ENCODE measurements at regions of chr6 and their contacts with region 1.

Region 1: DNA sequence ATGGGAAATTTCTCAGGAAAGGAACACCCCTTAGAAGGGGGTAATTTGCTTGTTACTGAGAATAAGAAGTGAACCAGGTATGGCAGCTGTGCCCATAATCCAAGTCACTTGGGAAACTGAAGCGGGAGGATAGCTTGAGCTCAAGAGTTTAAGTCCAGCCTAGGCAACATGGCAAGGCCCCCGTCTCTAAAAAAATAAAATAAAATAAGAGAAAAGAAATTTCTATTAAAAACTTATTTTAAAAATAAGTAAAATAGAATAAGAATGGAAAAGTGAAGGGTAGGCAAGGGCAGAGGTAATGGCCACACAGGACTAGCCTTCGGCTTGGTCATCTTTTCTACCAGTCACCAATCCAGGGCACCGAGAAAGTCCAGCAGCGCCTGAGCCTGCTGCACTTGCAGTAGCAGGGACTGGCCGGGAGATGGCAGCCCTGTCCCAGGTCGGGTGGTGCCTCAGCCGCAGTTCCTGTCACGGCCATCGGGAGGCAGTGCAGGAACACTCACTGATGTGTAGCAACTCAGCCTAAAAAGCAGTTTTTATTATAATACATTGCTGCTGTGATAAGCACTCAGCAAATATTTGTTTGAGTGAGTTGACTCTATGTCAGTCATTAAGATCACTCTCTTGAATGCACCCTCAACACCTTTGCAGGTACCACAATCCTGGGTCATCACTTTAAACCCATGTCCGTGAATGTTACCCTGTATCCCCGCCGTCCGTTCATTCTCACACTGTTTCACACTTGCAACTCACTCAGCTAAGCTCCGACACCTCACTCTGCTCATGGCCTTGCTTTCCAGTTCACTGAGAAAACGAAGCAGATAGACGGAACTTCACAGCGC is 23.2 kb upstream of the GCM1 start:
- DNase-seq: peak; percentile 58
- H3K4me3 ChIP-seq: no peak overlapping the region
- H3K27ac ChIP-seq: no peak overlapping the region
- H3K4me1 ChIP-seq: peaks cover 15% of the 10 kb centered on the region
- H3K27me3 ChIP-seq: no peaks in the 10 kb centered on the region
- CTCF ChIP-seq: peak; percentile 100

Region 2: GRCh38 chr6:53064726-53065215 is 107.1 kb before region 1 on chr6:
- CTCF ChIA-PET with region 1: no interaction called
- dilution Hi-C with region 1: no loop called
- in situ Hi-C with region 1: no loop called
- intact Hi-C with region 1: no loop called
- DNase-seq: peak; percentile 97
- H3K4me3 ChIP-seq: peak overlapping the region; percentile 85 to 95 (median 88)
- H3K27ac ChIP-seq: peak overlapping the region; percentile 45
- H3K4me1 ChIP-seq: peaks cover 11% of the 10 kb centered on the region
- H3K27me3 ChIP-seq: no peaks in the 10 kb centered on the region
- CTCF ChIP-seq: no peak

Region 3: GRCh38 chr6:53294095-53294494 is 122.3 kb after region 1 on chr6:
- CTCF ChIA-PET with region 1: no interaction called
- dilution Hi-C with region 1: no loop called
- in situ Hi-C with region 1: no loop called
- intact Hi-C with region 1: loop called (anchors 5 kb)
- DNase-seq: no peak
- H3K4me3 ChIP-seq: no peak overlapping the region
- H3K27ac ChIP-seq: no peak overlapping the region
- H3K4me1 ChIP-seq: peaks cover 16% of the 10 kb centered on the region
- H3K27me3 ChIP-seq: no peaks in the 10 kb centered on the region
- CTCF ChIP-seq: peak in 1 of 2 donors; percentile 37

Region 4: GRCh38 chr6:53410508-53411258 is 238.9 kb after region 1 on chr6:
- CTCF ChIA-PET with region 1: no interaction called
- dilution Hi-C with region 1: no loop called
- in situ Hi-C with region 1: no loop called
- intact Hi-C with region 1: loop called (anchors 1 kb)
- DNase-seq: peak; percentile 13
- H3K4me3 ChIP-seq: no peak overlapping the region
- H3K27ac ChIP-seq: no peak overlapping the region
- H3K4me1 ChIP-seq: no peaks in the 10 kb centered on the region
- H3K27me3 ChIP-seq: peaks cover 3% of the 10 kb centered on the region
- CTCF ChIP-seq: peak; percentile 44 to 73

Region 5: DNA sequence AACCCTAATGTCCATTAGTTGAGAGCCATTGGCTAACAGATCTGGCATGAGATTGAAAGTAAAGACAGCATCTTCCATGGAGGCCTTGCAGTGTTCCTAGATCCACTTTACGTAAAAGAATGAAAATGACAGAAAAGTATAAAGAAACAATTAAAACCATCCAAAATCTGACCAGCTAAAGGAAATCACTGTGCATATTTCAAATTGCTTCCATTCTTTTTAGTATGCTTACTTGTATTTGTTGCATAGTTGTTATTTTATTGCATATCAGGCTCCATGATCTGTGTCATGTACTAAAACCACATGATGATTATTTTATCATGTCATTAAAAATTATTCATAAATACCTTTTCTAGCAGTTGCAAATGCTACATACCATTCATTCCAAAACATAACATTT is 305.1 kb after region 1 on chr6:
- CTCF ChIA-PET with region 1: no interaction called
- dilution Hi-C with region 1: loop called (anchors 10 kb)
- in situ Hi-C with region 1: loop called (anchors 5 to 10 kb)
- intact Hi-C with region 1: no loop called
- DNase-seq: no peak
- H3K4me3 ChIP-seq: no peak overlapping the region
- H3K27ac ChIP-seq: no peak overlapping the region
- H3K4me1 ChIP-seq: peaks cover 10% of the 10 kb centered on the region
- H3K27me3 ChIP-seq: no peaks in the 10 kb centered on the region
- CTCF ChIP-seq: no peak

Region 6: GRCh38 chr6:53517056-53517455 is 345.2 kb after region 1 on chr6:
- CTCF ChIA-PET with region 1: interaction called, 13 read pairs
- dilution Hi-C with region 1: no loop called
- in situ Hi-C with region 1: no loop called
- intact Hi-C with region 1: no loop called
- DNase-seq: peak; percentile 44
- H3K4me3 ChIP-seq: no peak overlapping the region
- H3K27ac ChIP-seq: no peak overlapping the region
- H3K4me1 ChIP-seq: peaks cover 3% of the 10 kb centered on the region
- H3K27me3 ChIP-seq: no peaks in the 10 kb centered on the region
- CTCF ChIP-seq: no peak

Region 7: GRCh38 chr6:53679446-53679933 is 507.7 kb after region 1 on chr6:
- CTCF ChIA-PET with region 1: no interaction called
- dilution Hi-C with region 1: no loop called
- in situ Hi-C with region 1: loop called (anchors 25 kb)
- intact Hi-C with region 1: no loop called
- DNase-seq: peak; percentile 37
- H3K4me3 ChIP-seq: no peak overlapping the region
- H3K27ac ChIP-seq: peak overlapping the region; percentile 20
- H3K4me1 ChIP-seq: no peaks in the 10 kb centered on the region
- H3K27me3 ChIP-seq: no peaks in the 10 kb centered on the region
- CTCF ChIP-seq: peak; percentile 42 to 53

Measured in mammary epithelial cell (primary cell).